Colonic mucosa (tissue), 4 donors: ENCODE measurements at regions of chr19 and their contacts with region 1.

Region 1: GRCh38 chr19:38634757-38635482 is 12.5 kb upstream of the ACTN4 start:
- DNase-seq: peak; percentile 83
- H3K4me3 ChIP-seq: no peak overlapping the region
- H3K27ac ChIP-seq: peak overlapping the region; percentile 79
- H3K4me1 ChIP-seq: peaks cover 6% of the 10 kb centered on the region
- H3K27me3 ChIP-seq: no peaks in the 10 kb centered on the region
- CTCF ChIP-seq: peak; percentile 98

Region 2: DNA sequence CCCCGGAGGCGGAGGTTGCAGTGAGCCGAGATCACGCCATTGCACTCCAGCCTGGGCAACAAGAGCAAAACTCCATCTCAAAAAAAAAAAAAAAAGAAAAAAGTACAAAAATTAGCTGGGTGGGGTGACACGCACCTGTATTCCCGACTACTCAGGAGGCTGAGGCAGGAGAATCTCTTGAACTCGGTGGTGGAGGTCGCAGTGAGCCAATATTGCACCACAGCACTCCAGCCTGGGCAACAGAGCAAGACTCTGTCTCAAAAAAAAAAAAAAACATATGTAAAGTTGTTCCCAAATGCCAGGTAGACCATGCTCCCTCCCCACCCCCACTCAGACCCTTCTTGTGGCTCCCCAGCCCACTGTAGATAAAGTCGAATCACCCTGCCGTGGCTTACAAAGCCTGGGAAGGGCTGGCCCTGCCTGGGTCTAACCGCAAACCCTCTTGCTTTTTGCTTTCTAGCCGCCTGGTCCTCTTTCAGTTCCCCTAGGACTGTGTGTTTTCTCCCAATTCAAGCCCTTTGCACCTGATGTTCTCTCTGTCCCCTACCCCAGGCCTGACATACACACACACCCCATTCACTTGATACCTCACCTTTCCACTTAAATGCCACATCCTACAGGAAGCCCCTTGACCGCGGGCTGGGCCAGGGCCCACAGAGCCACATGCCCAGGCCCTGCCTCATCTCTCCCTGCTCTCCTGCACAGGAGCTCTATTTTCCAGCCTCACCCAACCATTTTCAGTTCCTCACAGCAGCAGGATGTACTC is 51.5 kb before region 1 on chr19:
- intact Hi-C with region 1: no loop called
- DNase-seq: no peak
- H3K4me3 ChIP-seq: no peak overlapping the region
- H3K27ac ChIP-seq: no peak overlapping the region
- H3K4me1 ChIP-seq: no peaks in the 10 kb centered on the region
- H3K27me3 ChIP-seq: no peaks in the 10 kb centered on the region
- CTCF ChIP-seq: no peak

Region 3: DNA sequence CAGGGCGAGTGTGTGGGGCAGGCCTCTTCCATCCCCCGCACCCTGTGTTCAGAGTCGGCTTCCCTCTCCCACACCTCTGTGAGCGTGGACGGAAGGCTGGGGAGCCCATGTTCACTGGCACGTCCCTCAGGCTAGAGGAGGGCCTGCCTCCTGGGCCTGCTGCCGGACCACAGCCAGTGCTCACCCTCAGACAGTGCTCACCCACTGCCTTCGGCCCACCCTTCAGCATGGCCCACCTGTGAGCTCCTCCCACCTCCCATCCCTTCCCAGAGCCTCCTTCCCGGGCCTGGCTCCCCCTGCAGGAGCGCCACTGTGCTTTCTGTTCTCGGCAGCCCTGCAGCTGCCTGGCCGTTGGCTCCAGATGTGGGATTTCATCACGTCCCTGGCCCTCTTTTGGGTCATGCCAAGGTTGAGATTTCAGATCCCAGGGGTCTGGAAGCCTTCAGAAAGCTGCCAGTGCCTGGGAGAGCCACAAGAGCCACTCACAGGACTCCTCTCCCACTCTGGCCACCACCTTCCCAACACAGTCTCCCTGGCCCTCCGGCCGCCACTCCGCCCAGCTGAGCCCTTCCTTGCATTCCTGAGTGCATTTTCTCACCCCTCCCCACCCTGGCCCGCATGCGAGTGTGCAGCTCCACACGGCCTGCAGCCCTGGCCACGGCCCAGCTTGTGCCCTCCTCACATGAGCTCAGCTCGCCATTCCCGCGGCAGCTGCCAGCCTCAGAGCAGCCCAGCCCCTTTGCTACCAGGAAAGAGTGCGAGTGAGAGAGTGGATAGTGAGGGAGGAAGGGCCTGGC is 84.0 kb after region 1 on chr19:
- intact Hi-C with region 1: no loop called
- DNase-seq: no peak
- H3K4me3 ChIP-seq: no peak overlapping the region
- H3K27ac ChIP-seq: no peak overlapping the region
- H3K4me1 ChIP-seq: no peaks in the 10 kb centered on the region
- H3K27me3 ChIP-seq: no peaks in the 10 kb centered on the region
- CTCF ChIP-seq: no peak

Region 4: GRCh38 chr19:38733436-38734175 is 98.7 kb after region 1 on chr19:
- intact Hi-C with region 1: loop called (anchors 2 kb)
- DNase-seq: peak; percentile 31
- H3K4me3 ChIP-seq: no peak overlapping the region
- H3K27ac ChIP-seq: peak overlapping the region; percentile 82
- H3K4me1 ChIP-seq: no peaks in the 10 kb centered on the region
- H3K27me3 ChIP-seq: no peaks in the 10 kb centered on the region
- CTCF ChIP-seq: no peak